ENCODE measurements at regions of chr4 and their contacts with region 1.

Region 1: DNA sequence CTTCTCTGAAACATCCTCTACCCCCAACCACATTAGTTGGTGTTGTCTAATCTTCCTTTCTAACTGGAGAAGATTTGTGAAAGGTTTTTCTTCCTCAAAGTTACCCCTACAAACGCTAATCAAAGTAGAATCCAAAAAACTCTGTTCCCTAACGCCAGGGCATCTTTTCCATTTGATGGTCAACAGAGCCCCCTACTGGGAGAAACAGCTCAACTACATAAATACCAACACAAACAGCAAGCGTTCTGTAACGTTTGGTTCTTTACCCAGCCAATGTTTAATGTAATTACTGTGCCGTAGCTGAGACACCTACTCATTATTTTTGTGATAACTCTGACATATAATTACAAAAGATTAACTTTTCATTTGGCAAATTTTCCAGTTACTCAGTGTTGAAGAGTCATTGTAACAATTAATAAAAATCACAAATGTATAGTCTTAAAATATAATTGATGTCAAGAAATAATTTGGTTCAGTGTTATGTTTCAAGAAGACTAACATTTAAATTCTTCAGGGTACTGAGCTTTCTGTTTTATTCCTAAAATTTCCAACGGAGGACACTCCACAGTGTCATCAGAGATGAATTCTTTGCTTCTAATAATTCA is 94.9 kb upstream of the TBC1D9 start:
- DNase-seq: no peak
- H3K4me3 ChIP-seq: no peak overlapping the region
- H3K27ac ChIP-seq: no peak overlapping the region
- H3K4me1 ChIP-seq: peaks cover 3% of the 10 kb centered on the region
- H3K27me3 ChIP-seq: no peaks in the 10 kb centered on the region
- CTCF ChIP-seq: peak; percentile 86

Region 2: GRCh38 chr4:140359562-140360427 is 491.3 kb before region 1 on chr4:
- intact Hi-C with region 1: loop called (anchors 5 kb)
- DNase-seq: peak; percentile 53
- H3K4me3 ChIP-seq: no peak overlapping the region
- H3K27ac ChIP-seq: no peak overlapping the region
- H3K4me1 ChIP-seq: no peaks in the 10 kb centered on the region
- H3K27me3 ChIP-seq: no peaks in the 10 kb centered on the region
- CTCF ChIP-seq: peak; percentile 84

Region 3: GRCh38 chr4:140617499-140618248 is 233.5 kb before region 1 on chr4:
- intact Hi-C with region 1: loop called (anchors 5 kb)
- DNase-seq: no peak
- H3K4me3 ChIP-seq: no peak overlapping the region
- H3K27ac ChIP-seq: no peak overlapping the region
- H3K4me1 ChIP-seq: no peaks in the 10 kb centered on the region
- H3K27me3 ChIP-seq: no peaks in the 10 kb centered on the region
- CTCF ChIP-seq: no peak

Region 4: GRCh38 chr4:140777894-140778293 is 73.2 kb before region 1 on chr4:
- intact Hi-C with region 1: no loop called
- DNase-seq: no peak
- H3K4me3 ChIP-seq: no peak overlapping the region
- H3K27ac ChIP-seq: no peak overlapping the region
- H3K4me1 ChIP-seq: no peaks in the 10 kb centered on the region
- H3K27me3 ChIP-seq: no peaks in the 10 kb centered on the region
- CTCF ChIP-seq: no peak

Measured in left ventricle myocardium inferior (tissue), 1 donor.